MCF 10A (cell line): ENCODE measurements at regions of chr9 and their contacts with region 1.

Region 1: DNA sequence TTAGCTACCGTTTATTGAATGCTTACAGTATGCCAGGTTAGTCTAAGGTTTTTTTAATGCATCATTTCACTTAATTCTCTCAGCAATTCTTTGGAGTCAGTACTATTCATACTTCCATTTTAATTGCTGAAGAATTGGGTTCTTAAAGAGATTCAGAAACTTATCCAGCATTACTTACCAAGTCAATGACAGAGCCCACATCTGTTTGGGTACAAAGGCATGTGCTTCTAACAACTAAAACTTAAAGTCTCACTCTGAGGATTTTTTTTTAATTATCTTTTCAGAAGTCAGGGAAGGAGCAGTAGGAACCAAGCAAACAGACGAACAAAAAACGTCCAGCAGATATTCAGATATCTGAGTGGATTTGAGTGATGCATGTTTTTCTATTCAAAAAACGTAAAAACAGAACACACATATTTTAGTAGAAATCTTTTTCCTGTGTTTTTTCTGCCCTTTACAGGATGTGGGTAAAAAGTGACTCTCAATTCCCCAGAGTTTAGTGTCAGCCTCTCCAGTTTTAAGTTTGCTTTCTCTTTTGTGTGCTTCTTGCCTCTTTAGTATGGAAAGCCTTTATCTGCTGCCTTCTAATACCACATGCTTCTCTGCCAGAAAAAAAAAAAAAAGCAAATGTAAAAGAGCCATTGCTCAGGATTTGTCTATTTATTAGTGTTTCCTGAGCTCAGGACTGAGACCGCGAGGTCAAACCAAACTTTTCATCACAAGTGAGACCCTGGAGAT is 118.0 kb downstream of the PRKACG start:
- DNase-seq: no peak
- H3K4me3 Mint-ChIP-seq: no peak overlapping the region
- H3K27ac Mint-ChIP-seq: no peak overlapping the region
- H3K4me1 Mint-ChIP-seq: no peaks in the 10 kb centered on the region
- H3K27me3 Mint-ChIP-seq: peaks cover 55% of the 10 kb centered on the region
- CTCF ChIP-seq: no peak

Region 2: DNA sequence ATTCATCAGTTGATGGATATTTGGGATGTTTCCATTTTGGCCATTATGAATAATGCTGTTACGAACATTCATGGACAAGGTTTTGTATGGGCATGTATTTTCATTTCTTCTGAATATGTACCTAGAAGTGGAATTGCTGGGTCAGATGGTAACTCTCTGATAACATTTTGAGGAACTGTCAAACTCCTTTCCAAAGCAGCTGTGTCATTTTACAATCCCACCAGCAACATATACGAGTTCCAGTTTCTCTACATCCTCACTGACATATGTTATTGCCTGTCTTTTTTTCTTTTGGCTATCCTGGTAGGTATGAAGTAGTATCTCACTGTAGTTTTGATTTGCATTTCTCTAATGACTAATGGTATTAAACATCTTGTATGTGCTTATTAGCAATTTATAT is 31.3 kb after region 1 on chr9:
- CTCF ChIA-PET with region 1: no interaction called
- POLR2A ChIA-PET with region 1: no interaction called
- intact Hi-C with region 1: loop called (anchors 2 kb)
- DNase-seq: no peak
- H3K4me3 Mint-ChIP-seq: no peak overlapping the region
- H3K27ac Mint-ChIP-seq: no peak overlapping the region
- H3K4me1 Mint-ChIP-seq: no peaks in the 10 kb centered on the region
- H3K27me3 Mint-ChIP-seq: peaks cover 74% of the 10 kb centered on the region
- CTCF ChIP-seq: no peak